Right ventricle myocardium superior (tissue), 1 donor: ENCODE measurements at regions of chr15 and their contacts with region 1.

Region 1: DNA sequence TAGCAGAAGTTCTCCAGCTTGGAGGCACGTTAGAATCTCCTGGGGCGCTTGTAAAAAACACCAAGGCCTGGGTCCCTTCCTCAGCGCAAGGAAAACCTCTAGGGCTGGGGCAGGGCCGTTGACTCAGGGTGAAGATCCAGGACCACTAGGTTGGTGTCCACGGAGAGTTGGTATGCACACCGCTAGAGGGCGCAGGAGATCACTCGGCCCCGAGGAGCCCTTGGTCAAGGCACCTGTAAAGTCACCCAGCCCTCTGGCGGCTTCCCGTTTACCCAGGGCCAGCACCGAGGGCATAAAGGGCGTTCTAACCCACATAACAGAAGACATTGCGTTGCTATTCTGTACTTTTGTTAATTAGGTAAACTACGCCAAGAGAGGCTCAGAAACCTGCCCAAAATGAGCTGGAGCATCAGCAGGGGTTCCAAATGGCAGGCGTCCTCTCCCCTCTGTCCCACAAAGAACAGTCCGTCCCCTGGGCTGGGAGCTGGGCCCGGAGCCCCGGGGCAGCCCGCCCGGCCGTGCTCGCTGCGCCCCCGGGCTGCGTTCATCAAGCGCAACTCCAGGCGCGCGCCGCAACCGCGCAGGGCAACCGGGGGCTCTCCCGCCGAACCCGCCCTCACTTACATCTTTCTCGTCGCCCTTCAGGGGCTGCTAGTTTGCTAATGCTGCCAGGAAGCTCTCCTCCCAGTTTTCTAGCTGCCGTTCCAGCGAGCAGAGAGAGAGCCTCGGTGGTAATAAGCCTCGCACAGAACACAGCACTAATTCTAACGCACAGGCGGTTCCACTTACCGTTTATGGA is 332.1 kb downstream of the ARRDC4 start:
- DNase-seq: peak; percentile 59
- ATAC-seq: peak; percentile 29

Region 2: GRCh38 chr15:97903971-97904572 is 388.6 kb before region 1 on chr15:
- intact Hi-C with region 1: loop called (anchors 5 kb)
- DNase-seq: peak; percentile 86
- ATAC-seq: peak; percentile 99